Left cardiac atrium (tissue), 4 donors: ENCODE measurements at regions of chr18 and their contacts with region 1.

Region 1: DNA sequence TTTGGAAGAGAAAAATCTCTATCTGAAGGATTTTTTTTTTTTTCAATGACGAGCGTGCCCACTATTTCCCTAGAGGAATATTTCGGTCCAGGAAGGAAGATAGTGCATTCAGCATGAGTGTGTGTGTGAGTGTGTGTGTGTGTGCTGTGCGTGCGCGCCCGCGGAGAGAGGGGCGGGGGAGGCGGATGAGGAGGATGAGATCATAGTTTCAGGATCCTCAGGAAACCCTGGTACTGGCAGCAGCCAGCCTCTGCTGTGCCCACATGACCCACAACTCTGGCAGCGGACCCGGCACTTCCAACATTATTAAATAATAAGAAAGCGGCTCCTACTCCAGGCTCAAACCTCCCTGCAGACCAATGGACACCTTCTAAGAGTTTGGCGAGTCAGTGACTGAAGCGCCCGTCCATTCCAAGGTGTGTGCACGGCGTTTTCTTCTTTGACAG is 217.0 kb upstream of the DTNA start:
- DNase-seq: peak; percentile 83
- ATAC-seq: peak; percentile 92 to 96

Region 2: DNA sequence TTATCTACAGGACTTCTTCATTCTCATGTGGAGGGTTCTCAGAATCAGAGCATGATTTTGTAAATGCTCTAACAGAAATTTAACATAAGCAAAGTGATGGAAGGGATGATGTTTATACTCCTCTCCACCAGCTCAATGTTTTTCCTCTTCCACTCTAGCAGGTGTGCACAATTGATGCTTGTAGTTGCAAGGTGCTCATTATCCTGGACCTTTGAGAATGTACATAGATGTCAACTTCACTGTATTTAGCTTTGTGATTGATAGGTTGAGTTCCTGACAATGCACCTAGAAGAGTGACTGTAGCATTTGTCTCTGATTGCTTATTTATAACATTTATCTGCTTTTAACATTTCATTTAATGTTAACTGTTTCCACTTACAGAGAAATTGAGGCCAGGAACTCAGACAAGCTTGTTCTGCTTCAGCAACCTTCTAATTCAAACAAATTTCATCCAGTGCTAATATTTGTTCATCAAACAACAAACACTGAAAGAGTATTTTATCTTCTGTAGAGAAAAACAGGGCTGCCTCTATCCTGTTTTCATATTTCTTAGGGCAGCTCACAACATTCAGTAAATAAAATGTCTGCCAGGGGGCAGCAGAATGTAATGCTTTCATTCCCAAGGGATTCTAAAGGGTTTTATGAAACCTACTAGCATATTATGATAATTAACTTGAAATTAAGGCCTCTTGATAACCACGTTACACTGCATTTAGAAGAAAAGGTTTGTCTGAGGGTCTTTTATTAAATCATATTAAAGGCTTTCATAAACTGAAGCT is 140.5 kb before region 1 on chr18:
- intact Hi-C with region 1: loop called in 1 of 2 experiments (anchors 10 kb)
- DNase-seq: no peak
- ATAC-seq: no peak

Region 3: DNA sequence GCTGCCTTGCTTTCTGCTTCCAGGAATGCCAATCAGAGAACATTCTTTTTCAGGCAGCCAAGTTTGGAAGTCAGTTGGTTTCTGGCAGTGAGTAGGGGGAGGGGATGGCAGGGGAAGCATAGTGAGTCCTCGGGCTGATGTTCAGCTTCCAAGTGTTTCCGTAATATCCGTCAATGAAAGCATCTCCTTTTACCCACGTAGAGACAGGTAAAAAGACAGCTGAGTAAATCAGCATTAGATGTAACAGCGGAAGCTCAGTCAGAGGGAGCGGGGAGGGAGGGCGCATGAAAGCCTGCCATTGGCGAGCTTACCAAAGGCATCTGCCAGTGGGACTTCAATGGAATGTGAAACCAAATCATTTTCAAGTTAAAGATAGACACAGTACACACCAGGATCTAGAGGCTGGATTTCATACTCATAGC is 99.8 kb after region 1 on chr18:
- intact Hi-C with region 1: loop called in 1 of 2 experiments (anchors 5 kb)
- DNase-seq: peak; percentile 63
- ATAC-seq: peak; percentile 96

Region 4: GRCh38 chr18:34661464-34662111 is 168.5 kb after region 1 on chr18:
- intact Hi-C with region 1: loop called in 1 of 2 experiments (anchors 10 kb)
- DNase-seq: no peak
- ATAC-seq: peak; percentile 66 to 67

Region 5: DNA sequence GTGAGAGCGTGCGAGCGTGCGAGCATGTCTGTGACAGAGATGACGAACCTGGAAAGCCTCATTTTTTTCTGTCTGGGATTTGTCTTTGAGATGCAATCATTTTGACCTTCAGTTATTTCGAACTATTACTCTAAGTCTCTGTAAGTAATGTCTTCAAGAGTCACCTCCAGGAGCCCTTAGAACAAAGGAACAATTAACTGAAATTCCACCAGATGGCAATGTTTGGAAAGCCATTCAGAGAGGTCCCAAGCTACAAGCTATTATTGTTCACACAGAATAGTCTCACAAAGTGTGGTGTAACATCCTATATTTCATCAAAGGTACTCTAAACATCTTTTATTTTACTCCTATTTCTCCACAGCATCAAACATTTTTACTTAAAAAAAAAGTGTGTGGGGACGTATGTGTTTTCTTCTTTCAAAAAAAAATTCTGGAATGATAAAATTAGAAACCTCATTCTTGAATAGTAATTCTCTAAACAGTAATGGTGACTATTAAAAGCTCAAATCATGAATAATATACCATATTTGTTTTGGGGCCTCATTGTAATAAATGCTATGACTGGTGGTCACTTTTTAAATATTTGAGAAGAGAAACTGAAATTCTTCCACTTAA is 512.9 kb after region 1 on chr18:
- intact Hi-C with region 1: no loop called
- DNase-seq: no peak
- ATAC-seq: peak; percentile 82 to 88

Region 6: DNA sequence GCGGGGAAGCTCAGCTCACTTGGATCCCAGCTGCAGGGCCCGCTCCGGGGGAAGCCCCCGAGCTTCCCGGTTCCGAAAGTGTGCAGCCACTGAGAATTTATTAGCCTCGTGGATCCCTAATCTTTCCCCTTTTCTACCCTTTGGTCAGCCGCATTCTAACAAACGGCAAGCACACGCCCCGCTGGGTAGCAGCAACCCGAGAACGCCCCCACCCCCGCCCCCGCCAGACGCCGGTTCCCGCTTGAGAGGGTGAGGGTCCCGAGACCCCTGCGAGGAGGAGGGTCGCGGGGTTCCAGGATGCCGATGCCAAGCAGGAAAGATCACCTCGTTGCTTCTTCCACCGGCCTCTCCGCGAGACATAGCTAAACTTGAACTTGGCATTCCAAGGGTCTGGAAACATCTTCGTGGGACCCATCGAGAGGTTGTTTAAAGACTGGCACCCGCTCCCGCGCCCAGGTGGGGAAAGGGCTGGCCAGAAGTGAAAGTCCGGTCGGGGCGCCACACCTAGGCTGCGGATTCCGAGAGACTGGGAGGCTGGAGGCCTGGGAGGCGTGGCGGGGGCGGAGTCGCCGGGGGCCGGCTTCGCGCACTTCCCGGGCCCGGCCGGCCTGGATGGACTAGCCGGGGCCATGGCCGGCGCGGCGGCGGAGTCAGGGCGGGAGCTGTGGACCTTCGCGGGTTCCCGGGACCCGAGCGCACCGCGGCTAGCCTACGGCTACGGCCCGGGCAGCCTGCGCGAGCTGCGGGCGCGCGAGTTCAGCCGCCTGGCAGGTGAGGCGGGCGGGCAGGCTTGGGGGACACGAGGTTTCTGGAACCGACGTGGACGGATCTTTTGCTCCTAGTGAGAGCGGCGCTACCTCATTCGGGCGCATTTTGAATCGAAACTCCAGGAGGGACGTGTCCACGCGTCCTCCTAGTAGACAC is 1694.1 kb after region 1 on chr18 and contains the start of gene MOCOS:
- intact Hi-C with region 1: no loop called
- DNase-seq: peak; percentile 82
- ATAC-seq: peak; percentile 95 to 98
- total RNA-seq, gene MOCOS: 0.97 to 1.4 TPM